H1 (cell line): ENCODE measurements at regions of chr1 and their contacts with region 1.

Region 1: GRCh38 chr1:218521375-218522169 is 176.4 kb downstream of the TGFB2 start:
- DNase-seq: peak; percentile 5 to 83
- H3K4me3 ChIP-seq: no peak overlapping the region
- H3K27ac ChIP-seq: no peak overlapping the region
- H3K4me1 ChIP-seq: no peaks in the 10 kb centered on the region; a peak in 1 of 7 replicates
- H3K27me3 ChIP-seq: peaks cover 0 to 1% (median 0%) of the 10 kb centered on the region in 4 experiments; a peak in 1 of 7 replicates
- CTCF ChIP-seq: peak in 2 of 3 experiments; percentile 65 to 83; a peak in 3 of 4 replicates
- EP300 ChIP-seq: no peak
- POLR2A ChIP-seq: no peak
- RAD21 ChIP-seq: peak; percentile 83 to 86

Region 2: DNA sequence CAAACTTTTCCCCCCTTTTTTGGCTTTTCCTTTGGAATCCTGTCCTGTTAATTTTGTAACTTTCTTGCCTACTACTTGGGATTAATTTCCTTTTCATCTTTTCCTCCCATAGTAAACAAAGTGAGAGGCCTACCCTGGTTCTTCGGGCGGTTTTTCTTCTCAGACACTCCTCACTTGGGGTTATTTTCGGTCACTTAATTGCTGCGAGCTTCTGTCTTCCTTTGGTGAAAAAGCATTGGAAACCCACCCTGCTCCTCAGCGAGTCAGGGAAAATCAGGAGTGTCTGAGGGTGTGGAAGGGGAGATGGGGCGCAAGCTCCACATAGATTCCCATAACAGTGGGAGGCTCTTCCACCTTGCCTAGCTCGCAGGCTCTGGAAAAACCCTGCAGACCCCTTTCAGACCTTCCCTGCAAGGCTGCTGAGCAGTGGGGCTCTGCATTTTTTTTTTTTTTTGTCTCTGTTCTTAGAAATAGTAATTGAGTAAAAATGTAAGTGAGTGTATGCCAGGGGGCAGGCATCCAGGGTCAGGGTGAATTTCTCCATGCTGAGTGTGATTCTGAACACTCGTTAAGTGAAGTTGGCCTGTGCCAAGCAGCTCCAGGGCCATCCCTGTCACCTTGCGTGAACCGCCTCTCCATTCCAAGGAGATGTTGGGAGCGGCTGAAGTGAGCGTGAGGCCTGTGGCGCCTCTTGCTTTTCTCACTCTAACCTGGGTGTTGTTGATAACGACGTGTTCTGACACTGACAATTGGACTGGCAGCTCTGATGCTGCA is 156.2 kb before region 1 on chr1:
- CTCF ChIA-PET with region 1: interaction called, 19 read pairs
- POLR2A ChIA-PET with region 1: no interaction called
- DNase-seq: no peak
- H3K4me3 ChIP-seq: no peak overlapping the region
- H3K27ac ChIP-seq: no peak overlapping the region; the same call in 1 of the 2 replicates
- H3K4me1 ChIP-seq: peaks cover 0 to 2% (median 0%) of the 10 kb centered on the region in 4 experiments; a peak in 1 of 7 replicates
- H3K27me3 ChIP-seq: no peaks in the 10 kb centered on the region
- CTCF ChIP-seq: no peak
- EP300 ChIP-seq: no peak
- POLR2A ChIP-seq: no peak
- RAD21 ChIP-seq: no peak

Region 3: GRCh38 chr1:218493986-218494852 is 27.4 kb before region 1 on chr1:
- CTCF ChIA-PET with region 1: interaction called, 15 read pairs
- POLR2A ChIA-PET with region 1: no interaction called
- DNase-seq: peak; percentile 51 to 54
- H3K4me3 ChIP-seq: peak overlapping the region in 1 of 4 experiments; percentile 23; a peak in 2 of 8 replicates
- H3K27ac ChIP-seq: peak overlapping the region; percentile 89
- H3K4me1 ChIP-seq: peaks cover 0 to 9% (median 5%) of the 10 kb centered on the region in 4 experiments; a peak in 6 of 7 replicates
- H3K27me3 ChIP-seq: no peaks in the 10 kb centered on the region
- CTCF ChIP-seq: no peak
- EP300 ChIP-seq: peak in 1 of 2 experiments; percentile 91; a peak in 1 of 3 replicates
- POLR2A ChIP-seq: peak in 1 of 2 experiments; percentile 52; a peak in 1 of 3 replicates
- RAD21 ChIP-seq: peak in 1 of 2 experiments; percentile 15; a peak in 1 of 4 replicates

Region 4: GRCh38 chr1:218503102-218503501 is 18.5 kb before region 1 on chr1:
- CTCF ChIA-PET with region 1: interaction called, 10 read pairs
- POLR2A ChIA-PET with region 1: no interaction called
- DNase-seq: no peak
- H3K4me3 ChIP-seq: no peak overlapping the region
- H3K27ac ChIP-seq: no peak overlapping the region
- H3K4me1 ChIP-seq: no peaks in the 10 kb centered on the region
- H3K27me3 ChIP-seq: no peaks in the 10 kb centered on the region
- CTCF ChIP-seq: no peak
- EP300 ChIP-seq: no peak
- POLR2A ChIP-seq: no peak
- RAD21 ChIP-seq: no peak